ENCODE measurements at regions of chr18 and their contacts with region 1.

Region 1: DNA sequence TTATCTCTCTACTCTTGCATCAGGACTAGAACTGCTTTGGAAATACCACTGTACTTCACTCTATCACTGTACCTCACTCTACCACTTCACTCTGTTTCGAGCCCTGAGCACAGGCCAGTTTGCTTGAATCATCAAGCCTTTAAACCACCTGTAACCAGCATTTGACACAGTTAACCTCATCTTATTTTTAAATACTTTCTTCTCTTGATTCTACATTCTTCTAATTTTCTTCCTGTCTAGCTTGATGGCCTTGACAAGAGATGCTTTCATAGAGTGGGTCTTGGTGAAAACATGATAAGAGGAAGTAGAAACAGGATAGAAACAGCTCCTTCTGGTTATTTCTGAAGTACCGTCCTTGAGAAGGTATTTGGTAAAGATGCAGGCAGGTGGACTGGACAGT is 78.1 kb downstream of the SPIRE1 start:
- DNase-seq: no peak
- ATAC-seq: no peak
- H3K4me3 ChIP-seq: no peak overlapping the region
- H3K27ac ChIP-seq: no peak overlapping the region
- H3K4me1 ChIP-seq: peaks cover 21% of the 10 kb centered on the region
- H3K27me3 ChIP-seq: no peaks in the 10 kb centered on the region
- CTCF ChIP-seq: no peak

Region 2: GRCh38 chr18:12597775-12598174 is 18.0 kb after region 1 on chr18:
- CTCF ChIA-PET with region 1: no interaction called
- POLR2A ChIA-PET with region 1: interaction called, 10 read pairs
- intact Hi-C with region 1: loop called (anchors 2 kb)
- DNase-seq: peak; percentile 86
- ATAC-seq: peak; percentile 73
- H3K4me3 ChIP-seq: no peak overlapping the region
- H3K27ac ChIP-seq: peak overlapping the region; percentile 56
- H3K4me1 ChIP-seq: peaks cover 48% of the 10 kb centered on the region
- H3K27me3 ChIP-seq: no peaks in the 10 kb centered on the region
- CTCF ChIP-seq: no peak

Measured in PC-3 (cell line).